Activated naive CD4-positive, alpha-beta T cell treated with anti-CD3 and anti-CD28 coated beads for 36 hours (primary cell): ENCODE measurements at regions of chr6 and their contacts with region 1.

Region 1: DNA sequence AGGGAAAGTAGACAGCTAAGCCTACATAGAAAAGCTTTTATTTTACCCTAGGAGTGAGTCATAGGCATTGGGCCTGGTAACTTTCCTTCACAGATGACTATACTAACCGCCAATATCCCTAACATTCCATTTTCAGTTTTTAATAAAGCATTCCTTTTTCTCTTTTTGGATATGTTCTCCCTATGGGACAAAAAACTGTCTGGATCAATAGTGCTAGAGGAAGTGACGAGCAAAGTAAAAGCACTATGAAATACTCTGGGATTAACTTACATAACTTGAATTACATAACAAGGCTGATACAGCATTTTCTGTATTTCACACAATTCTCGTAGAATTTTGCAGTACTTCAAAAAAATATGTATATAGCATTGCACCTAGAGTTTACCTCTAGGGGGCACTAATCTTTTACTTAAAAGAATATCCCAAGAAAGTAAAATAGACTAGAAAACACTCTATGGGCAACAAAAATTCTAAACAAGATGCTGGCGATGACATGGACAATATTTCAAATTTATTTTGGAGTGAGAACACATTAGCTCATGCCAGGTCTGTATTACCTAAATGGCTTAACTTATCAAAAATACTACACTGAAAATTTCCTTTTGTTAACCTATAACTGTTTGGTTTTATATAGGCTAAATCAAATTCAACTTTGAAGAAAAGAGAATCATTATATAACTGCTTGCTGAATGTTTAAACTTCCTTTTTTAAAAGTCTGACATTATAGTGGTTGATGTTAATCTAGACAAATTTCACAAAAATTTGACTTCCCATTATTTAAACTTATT is 66.3 kb upstream of the DST start:
- DNase-seq: no peak
- H3K4me3 Mint-ChIP-seq: no peak overlapping the region
- H3K27ac Mint-ChIP-seq: no peak overlapping the region
- H3K4me1 Mint-ChIP-seq: no peaks in the 10 kb centered on the region
- H3K27me3 Mint-ChIP-seq: peaks cover 5% of the 10 kb centered on the region

Region 2: DNA sequence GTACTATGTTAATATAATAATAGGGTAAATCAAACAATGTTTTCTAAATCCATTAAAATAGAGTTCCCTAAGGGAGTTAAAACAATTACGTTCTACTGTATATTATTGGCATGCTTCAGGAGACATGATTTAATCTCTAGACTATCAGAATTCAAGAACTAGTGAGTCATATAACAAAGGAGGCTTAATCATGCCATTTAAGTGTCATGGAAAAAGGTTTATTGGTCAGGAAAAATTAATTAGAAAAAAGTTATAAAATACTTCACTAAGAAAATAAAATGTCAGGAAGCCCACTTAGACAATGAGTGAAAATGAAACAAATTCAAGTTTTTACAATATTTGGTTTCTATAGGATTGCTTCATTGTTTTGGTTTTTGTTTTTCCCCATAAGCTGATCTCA is 1499.9 kb before region 1 on chr6:
- CTCF ChIA-PET with region 1: no interaction called
- intact Hi-C with region 1: no loop called
- DNase-seq: no peak
- H3K4me3 Mint-ChIP-seq: no peak overlapping the region
- H3K27ac Mint-ChIP-seq: no peak overlapping the region
- H3K4me1 Mint-ChIP-seq: no peaks in the 10 kb centered on the region
- H3K27me3 Mint-ChIP-seq: no peaks in the 10 kb centered on the region

Region 3: DNA sequence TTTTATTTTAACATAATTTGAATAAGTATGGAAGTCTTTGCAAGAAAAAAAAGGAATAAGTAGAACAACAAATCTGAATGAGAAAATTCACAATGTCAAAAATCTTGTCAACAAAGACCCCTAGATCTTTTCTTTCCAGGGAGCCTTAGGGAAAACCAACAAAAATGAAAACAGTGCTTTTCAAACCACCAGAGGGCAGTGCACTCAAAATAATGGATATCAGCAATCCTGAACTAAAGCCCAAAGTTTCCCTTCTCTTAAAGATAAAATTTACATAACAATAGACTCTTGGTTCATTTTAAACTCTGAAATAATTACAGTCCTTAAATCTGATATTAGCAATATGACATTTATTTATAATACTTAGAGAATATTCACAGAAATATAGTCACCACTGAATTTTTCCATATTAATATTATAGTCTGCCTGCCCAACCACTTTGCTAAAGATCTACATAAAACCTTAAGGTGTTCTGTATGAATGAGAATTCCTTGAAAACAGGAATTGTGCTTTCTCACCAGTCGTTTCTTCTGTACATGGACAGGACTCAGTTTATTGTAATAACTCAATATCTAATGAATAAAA is 728.3 kb before region 1 on chr6:
- CTCF ChIA-PET with region 1: no interaction called
- intact Hi-C with region 1: loop called (anchors 10 kb)
- DNase-seq: no peak
- H3K4me3 Mint-ChIP-seq: no peak overlapping the region
- H3K27ac Mint-ChIP-seq: no peak overlapping the region
- H3K4me1 Mint-ChIP-seq: no peaks in the 10 kb centered on the region
- H3K27me3 Mint-ChIP-seq: no peaks in the 10 kb centered on the region

Region 4: DNA sequence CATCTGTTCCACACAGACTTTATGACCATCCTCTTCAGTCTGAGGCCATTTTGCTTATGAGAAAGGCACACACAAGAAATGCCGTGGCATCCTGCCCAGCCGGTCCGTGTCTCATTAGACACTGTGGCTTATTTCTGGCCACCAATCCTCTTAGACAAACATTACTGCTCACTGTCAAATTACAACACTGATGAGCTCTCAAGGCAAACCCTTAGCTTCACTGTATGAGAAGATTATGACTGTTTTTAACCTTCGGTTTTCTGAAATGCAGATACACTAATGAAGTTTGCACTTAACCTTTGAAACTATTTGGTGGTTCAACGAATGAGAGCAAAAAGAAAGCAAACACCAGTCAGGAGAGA is 15.8 kb before region 1 on chr6:
- CTCF ChIA-PET with region 1: interaction called, 11 read pairs
- intact Hi-C with region 1: no loop called
- DNase-seq: no peak
- H3K4me3 Mint-ChIP-seq: no peak overlapping the region
- H3K27ac Mint-ChIP-seq: no peak overlapping the region
- H3K4me1 Mint-ChIP-seq: no peaks in the 10 kb centered on the region
- H3K27me3 Mint-ChIP-seq: peaks cover 4% of the 10 kb centered on the region

Region 5: DNA sequence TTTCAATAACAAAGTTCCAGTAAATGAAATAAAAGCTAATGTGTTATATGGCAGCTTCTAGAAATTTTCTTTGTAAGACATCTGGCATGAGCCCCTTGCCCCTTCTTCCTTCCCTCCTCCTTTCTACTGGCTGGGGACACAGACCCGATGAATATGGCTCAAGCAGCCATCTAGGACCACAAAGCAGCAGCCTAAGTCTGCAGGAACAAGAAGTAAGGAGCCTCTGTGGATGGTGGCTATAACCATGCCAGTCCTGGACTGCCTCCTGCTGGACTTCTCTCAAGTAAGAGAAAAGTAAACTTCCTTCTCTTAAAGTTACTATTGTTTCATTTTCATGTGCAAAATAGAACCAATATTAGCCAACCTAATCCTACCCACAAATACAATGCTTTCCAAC is 48.6 kb after region 1 on chr6:
- CTCF ChIA-PET with region 1: interaction called, 7 read pairs
- intact Hi-C with region 1: loop called (anchors 1 kb)
- DNase-seq: no peak
- H3K4me3 Mint-ChIP-seq: no peak overlapping the region
- H3K27ac Mint-ChIP-seq: no peak overlapping the region
- H3K4me1 Mint-ChIP-seq: peaks cover 5% of the 10 kb centered on the region
- H3K27me3 Mint-ChIP-seq: peaks cover 2% of the 10 kb centered on the region

Region 6: DNA sequence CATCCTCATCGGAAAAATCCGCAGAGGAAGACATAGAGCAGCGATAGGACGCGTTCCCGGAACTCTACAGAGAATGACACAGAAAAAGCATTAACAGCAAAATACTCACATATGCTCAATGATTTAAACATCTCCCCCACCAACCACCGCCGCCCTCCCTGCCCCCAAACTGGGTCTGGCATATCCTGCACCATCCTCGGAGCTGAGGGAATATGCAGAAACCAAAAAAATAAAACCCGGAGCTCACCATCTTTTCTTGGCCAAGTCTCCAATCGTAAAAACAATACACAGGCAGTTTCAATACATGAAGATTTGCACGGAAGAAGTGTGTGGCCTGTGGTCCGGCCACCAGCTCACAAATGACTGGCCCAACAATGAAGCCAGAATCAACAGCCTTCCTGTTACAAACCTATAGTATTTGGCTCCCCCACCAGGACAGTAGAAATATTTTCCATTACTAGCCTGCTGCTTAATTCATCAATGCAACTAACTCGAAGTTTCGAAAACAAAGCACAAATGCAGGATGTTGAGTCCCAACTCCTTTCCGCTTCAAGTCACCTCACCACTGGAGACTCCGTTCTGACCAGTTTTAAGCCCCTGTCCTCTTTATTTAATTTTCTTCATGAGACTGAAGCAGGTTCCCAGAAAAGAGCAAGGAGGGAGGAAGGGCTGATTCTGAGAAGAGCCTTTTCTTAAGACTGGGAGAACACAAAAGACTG is 142.7 kb after region 1 on chr6:
- CTCF ChIA-PET with region 1: interaction called, 40 read pairs
- intact Hi-C with region 1: loop called (anchors 1 kb)
- DNase-seq: peak; percentile 43
- H3K4me3 Mint-ChIP-seq: peak overlapping the region; percentile 67
- H3K27ac Mint-ChIP-seq: no peak overlapping the region
- H3K4me1 Mint-ChIP-seq: peaks cover 21% of the 10 kb centered on the region
- H3K27me3 Mint-ChIP-seq: peaks cover 38% of the 10 kb centered on the region

Region 7: GRCh38 chr6:56902641-56903464 is 193.8 kb after region 1 on chr6:
- CTCF ChIA-PET with region 1: interaction called, 4 read pairs
- intact Hi-C with region 1: loop called (anchors 1 kb)
- DNase-seq: no peak
- H3K4me3 Mint-ChIP-seq: no peak overlapping the region
- H3K27ac Mint-ChIP-seq: no peak overlapping the region
- H3K4me1 Mint-ChIP-seq: peaks cover 2% of the 10 kb centered on the region
- H3K27me3 Mint-ChIP-seq: peaks cover 5% of the 10 kb centered on the region

Region 8: DNA sequence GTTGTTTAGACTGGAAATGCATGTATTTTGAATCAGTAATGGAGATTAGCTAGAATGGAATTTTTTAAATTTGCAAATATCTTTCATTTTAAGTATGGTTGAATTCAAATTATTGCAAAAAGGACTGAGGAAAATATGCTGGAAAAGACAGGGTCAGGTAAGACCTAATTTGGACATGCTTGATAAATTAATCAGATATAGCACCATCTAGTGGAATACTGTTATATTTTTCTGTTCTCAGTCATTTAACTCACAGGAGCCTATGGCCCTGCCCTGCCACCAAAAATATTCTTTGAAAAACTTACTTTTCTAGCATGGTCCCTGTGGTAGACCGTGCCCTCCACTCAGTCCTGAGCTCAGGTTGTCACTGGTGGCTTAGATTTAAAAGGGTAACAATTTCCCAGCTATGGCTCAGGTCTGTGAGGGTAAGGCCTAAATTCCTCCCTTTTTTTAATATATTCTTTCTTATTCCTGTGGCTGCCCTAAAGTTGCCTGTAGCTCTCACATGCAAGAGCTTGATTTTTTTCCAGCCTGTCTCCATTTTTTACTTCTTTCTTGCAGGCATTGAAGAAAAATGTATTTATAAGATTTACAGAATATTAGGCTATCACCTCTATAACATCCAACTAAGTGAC is 312.2 kb after region 1 on chr6:
- CTCF ChIA-PET with region 1: interaction called, 3 read pairs
- intact Hi-C with region 1: loop called (anchors 10 kb)
- DNase-seq: peak; percentile 8
- H3K4me3 Mint-ChIP-seq: no peak overlapping the region
- H3K27ac Mint-ChIP-seq: no peak overlapping the region
- H3K4me1 Mint-ChIP-seq: no peaks in the 10 kb centered on the region
- H3K27me3 Mint-ChIP-seq: peaks cover 6% of the 10 kb centered on the region